Cardiac septum (tissue), 1 donor: ENCODE measurements at regions of chr17 and their contacts with region 1.

Region 1: DNA sequence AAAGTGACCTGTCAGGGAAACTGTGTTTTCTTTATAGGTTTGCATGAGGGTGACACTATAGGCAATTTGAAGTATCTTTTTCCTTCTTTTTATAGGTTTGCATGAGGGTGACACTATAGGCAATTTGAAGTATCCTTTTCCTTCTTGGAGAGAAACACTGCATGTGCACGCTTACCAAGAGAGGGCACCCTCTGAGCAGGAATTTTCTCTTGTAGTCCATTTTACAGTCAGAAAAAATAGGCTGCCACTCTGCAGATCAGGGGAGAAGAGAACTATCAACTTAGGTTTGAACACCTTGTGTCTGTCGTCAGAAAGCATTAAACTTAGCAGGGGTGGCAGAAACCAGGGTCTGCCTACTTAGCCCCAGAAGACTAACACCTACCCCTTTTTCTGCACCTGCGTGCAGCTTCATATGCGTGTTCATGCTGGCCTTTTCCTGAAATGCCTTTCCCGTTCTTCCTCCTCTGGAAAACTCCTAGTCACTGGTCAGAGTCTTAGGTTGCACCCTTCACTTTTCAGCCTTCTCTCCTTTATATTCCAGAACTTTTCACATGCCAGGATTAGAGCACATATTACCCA is 16.4 kb upstream of the SMIM36 start:
- DNase-seq: no peak

Region 2: DNA sequence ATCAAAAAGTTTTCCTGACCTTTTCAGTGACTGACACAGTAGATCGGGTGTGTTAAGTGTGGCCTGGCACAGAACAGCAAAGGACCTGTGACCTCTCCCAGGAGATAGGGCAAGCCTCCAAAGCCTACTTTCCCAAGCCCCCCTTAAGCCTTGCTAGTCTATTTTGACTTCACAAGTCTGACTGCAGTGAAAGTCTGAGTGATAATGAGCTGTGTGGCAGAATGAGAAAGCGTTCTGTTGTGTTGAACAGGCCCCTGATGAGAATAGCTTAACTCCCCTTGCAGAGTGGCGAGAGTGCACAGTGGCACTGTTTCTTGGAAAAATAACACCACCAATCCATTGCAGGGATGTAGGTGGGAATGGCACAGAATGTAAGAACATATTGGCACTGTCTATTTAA is 138.8 kb before region 1 on chr17:
- intact Hi-C with region 1: no loop called
- DNase-seq: no peak

Region 3: GRCh38 chr17:55601874-55602364 is 74.3 kb after region 1 on chr17:
- intact Hi-C with region 1: loop called (anchors 5 kb)
- DNase-seq: no peak

Region 4: GRCh38 chr17:55641676-55642081 is 114.0 kb after region 1 on chr17:
- intact Hi-C with region 1: loop called (anchors 5 kb)
- DNase-seq: peak; percentile 80

Region 5: GRCh38 chr17:55717898-55718735 is 190.5 kb after region 1 on chr17:
- intact Hi-C with region 1: loop called (anchors 5 kb)
- DNase-seq: peak; percentile 81

Region 6: DNA sequence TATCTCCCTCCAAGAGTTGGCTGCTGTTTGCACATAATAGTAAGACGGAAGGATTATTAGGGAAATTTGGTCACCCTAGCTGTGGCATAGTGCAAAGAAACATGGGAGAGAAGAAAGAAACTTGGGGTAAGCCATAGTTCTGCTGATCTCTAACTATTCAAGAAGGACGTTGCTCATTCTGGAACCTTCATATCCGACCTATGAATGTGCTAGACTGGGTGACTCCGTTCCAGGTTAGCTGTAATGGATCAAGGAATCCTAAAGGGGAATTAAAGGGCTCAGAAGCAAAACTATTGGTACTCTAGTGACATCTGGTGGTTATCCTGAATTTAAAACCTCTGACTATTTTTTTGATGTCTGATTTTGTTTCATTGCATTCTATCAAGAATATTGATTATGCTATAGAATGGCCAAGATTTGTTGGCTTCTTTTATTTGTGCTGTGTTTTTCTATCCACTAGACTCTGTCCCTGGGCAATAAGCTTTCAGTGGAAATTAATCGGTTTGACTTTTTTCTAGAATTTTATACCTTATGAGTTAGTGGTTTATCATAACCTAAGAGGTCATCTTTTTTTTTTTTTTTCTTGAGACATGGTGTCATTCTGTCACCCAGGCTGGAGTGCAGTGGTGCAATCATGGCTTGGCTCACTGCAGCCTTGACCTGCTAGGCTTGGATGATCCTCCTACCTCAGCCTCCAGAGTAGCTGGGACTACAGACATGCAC is 242.7 kb after region 1 on chr17:
- intact Hi-C with region 1: loop called (anchors 1 kb)
- DNase-seq: no peak

Region 7: DNA sequence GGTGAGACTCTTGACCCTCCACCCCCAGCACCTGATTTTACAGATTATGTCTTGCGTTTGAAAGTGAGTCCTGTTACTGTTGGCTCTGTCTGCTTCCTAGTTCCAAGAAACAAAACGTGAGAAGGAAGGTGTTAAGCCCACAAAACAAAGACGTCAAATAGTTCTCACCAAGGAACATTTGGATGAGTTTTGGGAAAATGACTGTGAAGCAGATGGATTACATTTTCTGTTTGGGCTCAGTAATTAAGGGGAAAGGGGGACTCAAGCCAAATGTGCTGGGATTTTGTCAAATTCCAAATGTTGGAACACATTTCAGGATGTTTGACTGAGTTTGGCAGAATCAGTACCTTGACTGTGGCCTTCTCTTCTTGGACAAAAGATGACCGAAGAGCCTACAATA is 294.4 kb after region 1 on chr17:
- intact Hi-C with region 1: loop called (anchors 5 kb)
- DNase-seq: no peak